Caco-2 (cell line): ENCODE measurements at regions of chr19 and their contacts with region 1.

Region 1: DNA sequence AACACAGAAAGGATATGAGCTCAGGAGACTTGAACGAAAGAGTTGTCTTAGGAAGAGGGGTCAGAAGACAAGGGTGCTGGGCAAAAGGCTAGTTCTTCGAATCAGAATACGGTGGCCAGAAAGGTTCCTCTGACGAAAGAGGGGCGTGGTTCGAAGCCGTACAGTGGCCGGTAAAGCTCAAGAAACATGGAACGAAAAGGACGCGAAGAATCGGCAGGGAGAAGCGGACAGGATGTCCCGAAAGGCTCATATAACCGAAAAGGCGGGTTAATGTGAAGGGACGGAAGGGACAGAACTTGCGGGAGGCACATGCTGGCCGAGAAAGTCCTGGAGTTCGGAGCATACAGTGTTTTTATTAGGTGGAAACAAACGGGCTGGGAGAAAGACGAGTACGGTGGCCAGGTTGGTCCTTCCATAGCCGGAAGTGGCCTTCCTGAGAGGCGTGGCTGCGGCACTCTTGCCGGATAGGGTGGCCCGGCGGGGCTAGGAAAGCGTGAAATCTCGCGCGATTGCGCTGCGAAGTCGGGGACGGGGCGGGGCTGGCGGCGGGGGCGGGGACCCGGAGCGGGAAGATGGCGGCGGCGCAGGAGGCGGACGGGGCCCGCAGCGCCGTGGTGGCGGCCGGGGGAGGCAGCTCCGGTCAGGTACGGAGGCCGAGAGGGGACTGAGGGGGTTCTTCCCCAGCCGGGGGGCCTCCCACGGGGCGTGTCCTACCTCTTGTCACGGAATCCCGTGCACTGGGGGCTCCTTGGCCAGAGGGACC is at the start of gene CLPTM1:
- DNase-seq: peak; percentile 97 to 98
- H3K4me3 ChIP-seq: peak within 1 kb of the TSS; percentile 93
- H3K4me3 Mint-ChIP-seq: peak within 1 kb of the TSS; percentile 99
- H3K27ac Mint-ChIP-seq: peak within 1 kb of the TSS; percentile 98
- H3K4me1 ChIP-seq: peaks cover 13% of the 10 kb centered on the region
- H3K4me1 Mint-ChIP-seq: peaks cover 16% of the 10 kb centered on the region
- H3K27me3 ChIP-seq: no peaks in the 10 kb centered on the region
- H3K27me3 Mint-ChIP-seq: no peaks in the 10 kb centered on the region
- CTCF ChIP-seq: no peak
- total RNA-seq, gene CLPTM1: 144 and 159 TPM in 2 replicates

Region 2: DNA sequence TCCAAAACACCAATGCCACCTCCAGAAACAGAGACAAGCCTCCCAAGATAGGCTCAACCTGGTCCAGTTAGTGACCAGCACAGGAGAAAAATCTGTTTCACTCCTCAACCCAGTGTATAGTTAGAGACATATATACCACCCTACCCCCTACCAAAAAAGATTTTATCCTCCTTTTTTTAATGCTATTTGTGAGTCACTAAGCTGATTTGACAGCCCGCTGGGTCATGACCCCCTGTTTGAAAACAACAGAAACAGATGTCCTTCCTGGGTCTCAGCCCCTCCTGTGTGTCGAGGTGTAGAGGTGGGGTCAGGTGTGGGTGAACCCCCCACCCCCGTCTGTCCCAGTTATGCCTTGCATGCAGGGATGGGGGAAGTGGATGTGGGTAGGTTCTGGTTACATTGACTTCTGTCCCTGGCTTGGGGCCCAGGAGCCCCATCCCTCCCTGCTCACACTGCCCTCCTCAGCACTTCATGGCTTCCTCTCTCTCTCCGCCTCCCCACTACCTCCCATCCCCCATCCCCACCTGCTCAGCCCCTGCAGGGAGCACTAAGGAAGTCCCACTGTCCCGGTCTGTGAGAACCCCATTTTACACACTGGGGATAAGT is 78.0 kb before region 1 on chr19:
- CTCF ChIA-PET with region 1: no interaction called
- POLR2A ChIA-PET with region 1: no interaction called
- intact Hi-C with region 1: no loop called
- DNase-seq: no peak
- H3K4me3 ChIP-seq: no peak overlapping the region
- H3K4me3 Mint-ChIP-seq: no peak overlapping the region
- H3K27ac Mint-ChIP-seq: peak overlapping the region; percentile 21
- H3K4me1 ChIP-seq: peaks cover 17% of the 10 kb centered on the region
- H3K4me1 Mint-ChIP-seq: peaks cover 17% of the 10 kb centered on the region
- H3K27me3 ChIP-seq: no peaks in the 10 kb centered on the region
- H3K27me3 Mint-ChIP-seq: no peaks in the 10 kb centered on the region
- CTCF ChIP-seq: no peak

Region 3: DNA sequence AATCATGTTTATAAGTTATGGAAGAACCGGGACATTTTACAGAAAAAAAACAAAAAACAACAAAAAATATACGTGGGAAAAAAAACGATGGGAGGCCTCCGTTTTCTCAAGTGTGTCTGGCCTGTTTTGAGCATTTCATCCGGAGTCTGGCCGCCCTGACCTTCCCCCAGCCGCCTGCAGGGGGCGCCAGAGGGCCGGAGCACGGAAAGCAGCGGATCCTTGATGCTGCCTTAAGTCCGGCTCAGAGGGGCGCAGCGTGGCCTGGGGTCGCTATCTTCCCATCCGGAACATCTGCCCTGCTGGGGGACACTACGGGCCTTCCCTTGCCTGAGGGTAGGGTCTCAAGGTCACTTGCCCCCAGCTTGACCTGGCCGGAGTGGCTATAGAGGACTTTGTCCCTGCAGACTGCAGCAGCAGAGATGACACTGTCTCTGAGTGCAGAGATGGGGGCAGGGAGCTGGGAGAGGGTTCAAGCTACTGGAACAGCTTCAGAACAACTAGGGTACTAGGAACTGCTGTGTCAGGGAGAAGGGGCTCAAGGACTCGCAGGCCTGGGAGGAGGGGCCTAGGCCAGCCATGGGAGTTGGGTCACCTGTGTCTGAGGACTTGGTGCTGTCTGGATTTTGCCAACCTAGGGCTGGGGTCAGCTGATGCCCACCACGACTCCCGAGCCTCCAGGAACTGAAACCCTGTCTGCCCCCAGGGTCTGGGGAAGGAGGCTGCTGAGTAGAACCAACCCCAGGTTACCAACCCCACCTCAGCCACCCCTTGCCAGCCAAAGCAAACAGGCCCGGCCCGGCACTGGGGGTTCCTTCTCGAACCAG is 51.2 kb before region 1 on chr19:
- CTCF ChIA-PET with region 1: interaction called, 5 read pairs
- POLR2A ChIA-PET with region 1: no interaction called
- intact Hi-C with region 1: loop called (anchors 1 kb)
- DNase-seq: peak; percentile 71 to 89
- H3K4me3 ChIP-seq: no peak overlapping the region
- H3K4me3 Mint-ChIP-seq: no peak overlapping the region
- H3K27ac Mint-ChIP-seq: peak overlapping the region; percentile 51
- H3K4me1 ChIP-seq: peaks cover 30% of the 10 kb centered on the region
- H3K4me1 Mint-ChIP-seq: peaks cover 15% of the 10 kb centered on the region
- H3K27me3 ChIP-seq: no peaks in the 10 kb centered on the region
- H3K27me3 Mint-ChIP-seq: no peaks in the 10 kb centered on the region
- CTCF ChIP-seq: peak; percentile 99

Region 4: DNA sequence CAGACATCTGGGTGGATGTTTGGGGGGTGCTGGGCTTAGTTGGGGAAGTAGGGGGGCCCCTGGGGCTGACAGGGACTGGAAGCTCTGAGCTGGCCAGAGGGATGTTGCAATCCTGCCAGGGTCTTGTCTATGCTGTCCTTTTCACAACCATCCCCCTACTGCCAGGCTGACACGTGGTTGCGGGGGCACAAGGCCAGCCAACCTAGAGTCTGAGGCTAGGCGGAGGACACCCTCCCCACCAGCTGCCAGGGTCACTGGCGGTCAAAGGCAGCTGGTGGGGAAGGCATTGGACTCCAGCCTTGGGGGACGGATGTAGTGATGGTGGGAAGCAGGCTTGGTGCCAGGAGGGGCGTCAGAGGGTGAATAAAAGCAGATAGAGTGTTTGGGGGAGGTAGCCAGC is 42.2 kb before region 1 on chr19:
- CTCF ChIA-PET with region 1: interaction called, 6 read pairs
- POLR2A ChIA-PET with region 1: interaction called, 35 read pairs
- intact Hi-C with region 1: no loop called
- DNase-seq: no peak
- H3K4me3 ChIP-seq: no peak overlapping the region
- H3K4me3 Mint-ChIP-seq: no peak overlapping the region
- H3K27ac Mint-ChIP-seq: no peak overlapping the region
- H3K4me1 ChIP-seq: peaks cover 18% of the 10 kb centered on the region
- H3K4me1 Mint-ChIP-seq: peaks cover 51% of the 10 kb centered on the region
- H3K27me3 ChIP-seq: no peaks in the 10 kb centered on the region
- H3K27me3 Mint-ChIP-seq: no peaks in the 10 kb centered on the region
- CTCF ChIP-seq: no peak

Region 5: DNA sequence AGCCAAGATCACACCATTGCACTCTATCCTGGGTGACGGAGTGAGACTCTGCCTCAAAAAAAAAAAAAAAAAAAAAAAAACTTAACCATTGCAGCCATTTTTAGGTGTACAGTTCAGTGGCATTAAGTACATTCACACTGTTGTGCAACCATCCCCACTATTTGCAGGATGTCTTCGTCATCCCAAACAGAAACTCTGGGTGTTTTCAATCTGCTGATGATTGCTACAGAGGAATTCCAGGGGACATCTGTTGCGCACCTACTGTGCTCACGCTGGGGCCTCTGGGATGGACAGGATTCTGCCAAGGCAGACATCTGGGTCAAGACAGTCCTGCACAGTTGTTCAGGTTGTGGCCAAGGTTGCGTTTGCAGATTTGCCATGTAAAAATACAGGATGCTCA is 15.3 kb before region 1 on chr19:
- CTCF ChIA-PET with region 1: no interaction called
- POLR2A ChIA-PET with region 1: interaction called, 3 read pairs
- intact Hi-C with region 1: loop called (anchors 1 kb)
- DNase-seq: no peak
- H3K4me3 ChIP-seq: no peak overlapping the region
- H3K4me3 Mint-ChIP-seq: no peak overlapping the region
- H3K27ac Mint-ChIP-seq: no peak overlapping the region
- H3K4me1 ChIP-seq: peaks cover 7% of the 10 kb centered on the region; the same call in 1 of the 2 replicates
- H3K4me1 Mint-ChIP-seq: peaks cover 8% of the 10 kb centered on the region
- H3K27me3 ChIP-seq: no peaks in the 10 kb centered on the region
- H3K27me3 Mint-ChIP-seq: no peaks in the 10 kb centered on the region
- CTCF ChIP-seq: no peak

Region 6: DNA sequence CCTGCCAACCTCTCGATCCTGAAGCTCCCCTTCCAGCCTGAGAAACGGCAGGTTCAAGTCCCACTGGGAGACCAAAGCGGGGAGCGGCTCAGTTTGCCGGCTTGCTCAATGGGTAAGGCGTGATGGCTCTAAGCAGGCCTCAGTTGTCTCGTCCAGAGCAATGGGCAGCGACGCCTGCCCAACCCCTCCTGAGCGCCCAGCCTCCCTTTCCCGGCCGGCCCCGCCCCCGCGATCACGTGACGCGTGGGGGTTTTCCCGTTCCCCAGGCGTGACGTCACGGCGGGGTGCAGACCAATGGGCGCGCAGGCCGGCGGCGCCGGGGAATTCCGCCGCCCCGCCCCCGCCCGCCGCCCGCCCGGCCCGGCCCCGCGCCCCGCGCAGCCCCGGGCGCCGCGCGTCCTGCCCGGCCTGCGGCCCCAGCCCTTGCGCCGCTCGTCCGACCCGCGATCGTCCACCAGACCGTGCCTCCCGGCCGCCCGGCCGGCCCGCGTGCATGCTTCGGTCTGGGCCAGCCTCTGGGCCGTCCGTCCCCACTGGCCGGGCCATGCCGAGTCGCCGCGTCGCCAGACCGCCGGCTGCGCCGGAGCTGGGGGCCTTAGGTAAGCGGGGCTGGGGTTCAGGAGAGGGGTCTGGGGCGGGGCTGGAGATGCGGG is 46.2 kb after region 1 on chr19 and contains the start of gene RELB:
- CTCF ChIA-PET with region 1: no interaction called
- POLR2A ChIA-PET with region 1: no interaction called
- intact Hi-C with region 1: loop called (anchors 2 kb)
- DNase-seq: peak; percentile 94 to 99
- H3K4me3 ChIP-seq: peak within 1 kb of the TSS; percentile 91
- H3K4me3 Mint-ChIP-seq: peak within 1 kb of the TSS; percentile 94
- H3K27ac Mint-ChIP-seq: peak within 1 kb of the TSS; percentile 89
- H3K4me1 ChIP-seq: peaks cover 10% of the 10 kb centered on the region
- H3K4me1 Mint-ChIP-seq: peaks cover 8% of the 10 kb centered on the region
- H3K27me3 ChIP-seq: no peaks in the 10 kb centered on the region
- H3K27me3 Mint-ChIP-seq: no peaks in the 10 kb centered on the region
- CTCF ChIP-seq: no peak
- total RNA-seq, gene RELB: 6.3 and 10.2 TPM in 2 replicates

Region 7: DNA sequence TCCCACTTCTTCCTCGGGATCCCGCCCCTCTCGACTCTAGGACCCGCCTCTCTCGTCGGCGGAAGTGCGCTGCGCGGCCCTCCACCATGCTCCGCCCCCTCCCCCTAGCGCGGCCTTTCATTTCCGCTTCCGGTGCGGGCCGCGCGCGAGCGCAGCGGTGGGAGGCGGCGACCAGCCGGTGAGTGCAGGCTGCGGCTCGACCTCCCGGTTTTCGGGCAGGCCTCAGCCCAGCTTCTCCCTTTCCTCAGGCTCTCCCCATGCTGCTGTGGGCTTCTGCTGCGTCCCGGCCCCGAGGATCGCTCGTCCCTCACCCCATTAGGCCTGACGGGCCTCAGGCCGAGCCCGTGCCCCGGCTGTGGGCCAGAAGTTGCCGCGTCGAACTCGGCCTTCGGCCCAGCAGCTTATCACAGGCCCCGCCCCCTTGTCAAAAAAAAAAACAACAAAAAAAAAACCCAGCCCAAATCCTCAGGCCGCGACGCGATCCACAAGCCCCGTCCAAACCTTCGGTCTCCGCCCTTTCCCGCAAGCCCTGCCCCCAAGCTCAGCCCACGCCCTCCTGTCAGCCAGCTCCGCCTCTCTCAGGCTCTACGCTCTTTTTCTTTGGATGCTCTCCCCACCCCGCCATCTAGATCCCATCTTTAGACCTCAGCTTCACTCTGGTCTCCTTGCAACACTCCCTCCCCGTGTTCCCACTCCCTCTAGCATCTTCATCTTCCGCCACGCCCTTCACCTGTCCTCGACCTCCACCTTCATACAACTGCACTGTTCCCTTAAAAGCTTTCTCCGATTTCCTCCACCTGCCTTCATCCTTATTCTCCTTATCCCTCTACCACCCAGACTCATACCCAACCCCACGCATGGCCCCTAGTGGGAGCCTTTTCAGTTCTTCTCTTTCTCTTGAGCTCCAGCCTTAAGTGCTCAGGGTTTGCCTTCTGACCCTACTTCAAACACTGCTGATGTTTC is 84.2 kb after region 1 on chr19 and contains the start of gene CLASRP:
- CTCF ChIA-PET with region 1: no interaction called
- POLR2A ChIA-PET with region 1: interaction called, 10 read pairs
- intact Hi-C with region 1: no loop called
- DNase-seq: peak; percentile 91 to 94
- H3K4me3 ChIP-seq: peak within 1 kb of the TSS; percentile 55
- H3K4me3 Mint-ChIP-seq: peak within 1 kb of the TSS; percentile 87
- H3K27ac Mint-ChIP-seq: peak within 1 kb of the TSS; percentile 77
- H3K4me1 ChIP-seq: peaks cover 9% of the 10 kb centered on the region; the same call in 1 of the 2 replicates
- H3K4me1 Mint-ChIP-seq: peaks cover 9% of the 10 kb centered on the region
- H3K27me3 ChIP-seq: no peaks in the 10 kb centered on the region
- H3K27me3 Mint-ChIP-seq: no peaks in the 10 kb centered on the region
- CTCF ChIP-seq: no peak
- total RNA-seq, gene CLASRP: 104 and 111 TPM in 2 replicates

Region 8: DNA sequence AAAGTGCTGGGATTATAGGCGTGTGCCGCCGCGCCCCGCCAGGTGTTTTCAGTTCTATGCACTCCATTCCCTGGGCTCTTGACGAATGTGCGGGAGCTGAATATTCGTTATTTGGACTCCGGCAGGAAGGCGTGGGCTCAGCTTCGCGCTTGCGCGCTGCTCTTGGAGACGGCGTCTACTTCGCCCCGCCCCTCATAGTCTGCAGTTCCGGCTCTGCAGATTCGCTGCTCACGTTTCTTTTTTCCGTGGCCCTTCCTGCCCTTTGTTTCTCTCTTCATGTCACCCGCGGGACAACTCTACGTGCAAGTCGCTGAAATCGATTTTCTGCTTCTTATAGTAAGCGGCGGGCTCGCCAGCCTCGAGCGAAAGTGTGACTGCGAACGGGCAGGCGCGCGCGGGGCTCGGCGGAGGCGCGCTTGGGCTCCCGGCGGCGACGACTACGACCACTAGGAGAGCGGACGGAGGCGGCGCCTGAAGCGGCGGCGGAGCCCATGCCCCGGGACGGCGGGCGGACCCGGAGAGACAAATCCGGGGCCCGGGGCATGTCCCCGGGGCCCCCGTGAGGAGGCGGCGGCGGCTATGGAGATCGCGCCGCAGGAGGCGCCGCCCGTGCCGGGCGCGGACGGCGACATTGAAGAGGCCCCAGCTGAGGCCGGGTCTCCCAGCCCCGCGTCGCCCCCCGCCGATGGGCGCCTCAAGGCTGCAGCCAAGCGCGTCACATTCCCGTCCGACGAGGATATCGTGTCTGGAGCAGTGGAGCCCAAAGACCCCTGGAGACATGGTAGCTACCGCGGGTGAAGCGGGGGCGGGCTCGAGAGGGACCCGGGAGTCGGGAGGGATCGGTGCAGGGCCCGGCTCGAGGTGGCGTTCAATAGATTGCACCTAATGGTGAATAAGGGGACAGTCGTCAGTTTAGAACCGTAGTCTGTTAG is 138.0 kb after region 1 on chr19 and contains the start of gene PPP1R37:
- CTCF ChIA-PET with region 1: no interaction called
- POLR2A ChIA-PET with region 1: no interaction called
- intact Hi-C with region 1: no loop called
- DNase-seq: peak; percentile 96 to 97
- H3K4me3 ChIP-seq: peak within 1 kb of the TSS; percentile 93
- H3K4me3 Mint-ChIP-seq: peak within 1 kb of the TSS; percentile 84
- H3K27ac Mint-ChIP-seq: peak within 1 kb of the TSS; percentile 96
- H3K4me1 ChIP-seq: peaks cover 10% of the 10 kb centered on the region; the same call in 1 of the 2 replicates
- H3K4me1 Mint-ChIP-seq: peaks cover 31% of the 10 kb centered on the region
- H3K27me3 ChIP-seq: no peaks in the 10 kb centered on the region
- H3K27me3 Mint-ChIP-seq: no peaks in the 10 kb centered on the region
- CTCF ChIP-seq: no peak
- total RNA-seq, gene PPP1R37: 42.1 and 47.7 TPM in 2 replicates